Activated CD4-positive, alpha-beta T cell treated with anti-CD3 and anti-CD28 coated beads, Interleukin-2, amount 10 ng/mL, durations not matched to agents 7 days and 5 days (primary cell): ENCODE measurements at regions of chr5 and their contacts with region 1.

Region 1: DNA sequence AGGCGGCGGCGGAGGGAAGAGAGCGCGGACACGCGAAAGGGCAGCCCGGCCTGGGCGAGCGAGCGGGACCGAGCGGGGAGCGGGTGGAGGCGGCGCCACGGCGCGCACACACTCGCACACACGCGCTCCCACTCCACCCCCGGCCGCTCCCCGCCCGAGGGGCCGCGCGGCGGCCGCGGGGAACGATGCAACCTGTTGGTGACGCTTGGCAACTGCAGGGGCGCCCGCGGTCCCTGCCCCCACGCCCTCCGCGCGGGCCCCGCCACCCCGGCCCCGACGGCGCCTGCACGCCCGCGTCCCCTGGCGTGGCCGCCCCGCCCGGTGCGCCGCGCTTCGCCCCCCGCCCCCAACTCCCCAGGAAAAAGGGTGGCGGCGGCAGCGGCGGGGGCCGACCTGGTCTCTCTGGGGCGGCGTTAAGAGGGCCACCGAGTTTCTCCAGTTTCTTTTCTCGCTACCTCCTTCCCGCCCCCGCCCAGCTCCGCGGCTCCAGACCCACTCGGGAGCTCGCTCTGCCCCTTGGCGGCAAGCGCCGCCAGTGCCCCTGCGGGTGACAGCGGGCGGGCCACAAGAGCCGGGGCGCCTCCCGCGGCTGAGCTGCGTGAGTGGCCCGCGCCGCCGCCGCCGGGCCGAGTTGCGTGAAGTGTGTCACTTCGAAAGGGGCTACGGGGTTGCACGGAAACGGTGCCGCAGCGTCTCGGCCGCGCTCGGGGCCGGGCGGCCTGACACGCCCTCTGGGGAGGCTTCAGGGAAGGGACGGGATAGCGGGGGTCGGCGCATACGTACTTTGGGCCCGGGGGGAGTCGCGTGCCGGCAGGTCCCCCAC is at the start of gene NR3C1:
- DNase-seq: peak; percentile 86
- H3K4me3 Mint-ChIP-seq: peak within 1 kb of the TSS; percentile 94
- H3K27ac Mint-ChIP-seq: peak within 1 kb of the TSS; percentile 100
- H3K4me1 Mint-ChIP-seq: peaks cover 52% of the 10 kb centered on the region
- H3K27me3 Mint-ChIP-seq: no peaks in the 10 kb centered on the region
- total RNA-seq, gene NR3C1: 62.7 to 73.1 TPM

Region 2: GRCh38 chr5:143370440-143370839 is 33.4 kb before region 1 on chr5:
- CTCF ChIA-PET with region 1: no interaction called
- POLR2A ChIA-PET with region 1: no interaction called
- DNase-seq: no peak
- H3K4me3 Mint-ChIP-seq: no peak overlapping the region
- H3K27ac Mint-ChIP-seq: no peak overlapping the region
- H3K4me1 Mint-ChIP-seq: peaks cover 13% of the 10 kb centered on the region
- H3K27me3 Mint-ChIP-seq: no peaks in the 10 kb centered on the region

Region 3: DNA sequence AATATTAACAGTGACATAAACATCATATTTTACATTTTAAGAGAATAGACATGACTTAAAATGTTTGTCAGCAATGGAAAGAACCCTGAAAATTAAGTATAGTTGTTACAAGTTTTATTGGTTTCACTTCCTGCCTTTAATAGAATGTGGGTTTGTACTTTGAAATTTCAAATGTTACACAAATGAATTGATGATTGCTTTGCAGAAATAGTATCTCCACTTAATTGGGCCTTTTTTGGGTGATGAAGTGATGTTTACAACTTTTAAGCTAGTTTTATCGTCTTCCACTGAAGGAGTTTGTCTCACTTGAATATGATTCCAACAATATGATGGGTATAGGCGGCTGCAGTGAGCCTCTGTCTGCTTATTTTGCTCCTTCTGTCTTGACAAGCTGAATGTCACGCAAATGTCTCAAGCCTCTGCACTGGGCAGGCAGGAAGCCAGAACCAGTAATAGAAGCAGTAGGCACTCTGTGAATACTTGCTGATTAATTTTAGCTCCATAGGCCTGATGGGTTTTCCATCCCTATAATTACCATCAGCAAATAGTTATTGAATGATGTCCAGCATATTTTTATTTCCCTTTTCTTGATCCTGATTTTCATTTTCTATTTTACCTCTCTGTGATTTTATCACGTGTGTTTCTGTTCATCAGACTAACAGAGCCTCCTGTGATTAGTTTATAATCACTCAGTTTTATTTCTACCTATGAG is 10.3 kb after region 1 on chr5:
- CTCF ChIA-PET with region 1: interaction called, 10 read pairs
- POLR2A ChIA-PET with region 1: no interaction called
- DNase-seq: no peak
- H3K4me3 Mint-ChIP-seq: peak overlapping the region; percentile 14
- H3K27ac Mint-ChIP-seq: peak overlapping the region; percentile 46
- H3K4me1 Mint-ChIP-seq: peaks cover 28% of the 10 kb centered on the region
- H3K27me3 Mint-ChIP-seq: no peaks in the 10 kb centered on the region

Region 4: DNA sequence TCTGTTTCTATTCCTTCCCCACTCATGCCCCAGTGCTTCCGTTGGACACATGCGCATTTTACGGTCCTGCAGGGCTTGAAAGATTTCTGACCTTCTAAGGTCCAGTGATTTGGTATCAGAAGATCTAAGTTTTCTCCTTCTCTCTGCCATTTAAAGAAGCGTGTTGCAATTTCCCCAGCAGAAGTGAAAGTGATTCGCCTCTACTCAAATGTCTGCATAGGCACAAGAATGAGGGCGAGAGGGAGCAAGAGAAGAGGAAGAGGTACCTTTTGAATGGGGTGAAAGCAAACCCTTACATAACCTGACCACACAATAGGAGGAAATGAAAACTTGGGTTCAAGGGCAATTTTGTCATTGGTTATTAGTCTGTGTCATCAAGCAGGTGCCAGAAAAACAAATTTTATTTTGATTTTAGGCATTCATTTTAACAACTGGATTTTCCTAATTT is 31.4 kb after region 1 on chr5:
- CTCF ChIA-PET with region 1: interaction called, 11 read pairs
- POLR2A ChIA-PET with region 1: interaction called, 8 read pairs
- DNase-seq: peak; percentile 51
- H3K4me3 Mint-ChIP-seq: peak overlapping the region; percentile 90
- H3K27ac Mint-ChIP-seq: peak overlapping the region; percentile 97
- H3K4me1 Mint-ChIP-seq: peaks cover 51% of the 10 kb centered on the region
- H3K27me3 Mint-ChIP-seq: peaks cover 3% of the 10 kb centered on the region